Natural killer cell (primary cell): ENCODE measurements at regions of chr1 and their contacts with region 1.

Region 1: DNA sequence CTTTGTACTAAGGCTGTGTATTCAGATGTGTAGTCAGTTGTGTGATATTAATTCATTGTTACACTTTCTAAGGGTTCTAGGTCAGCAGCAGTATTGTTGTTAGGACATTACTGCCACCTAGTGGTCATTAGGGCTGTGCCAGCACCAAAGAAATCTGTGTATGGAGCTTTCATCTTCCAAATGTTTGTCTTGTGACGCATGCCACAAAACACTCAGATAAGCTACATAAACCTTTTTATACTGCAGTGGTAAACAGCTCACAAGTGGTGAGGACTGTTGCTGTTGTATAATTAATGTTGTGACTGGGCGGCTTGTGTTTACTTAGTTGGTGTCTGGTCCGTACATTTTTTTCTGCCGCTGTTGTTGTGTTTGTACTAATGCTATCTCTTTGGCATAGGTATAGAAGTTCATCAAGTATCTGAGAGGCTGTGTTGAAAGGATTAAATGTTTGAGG is 51.7 kb downstream of the S1PR1 start:
- DNase-seq: peak in 1 of 2 donors; percentile 91
- ATAC-seq: peak; percentile 37 to 69 (median 61)
- H3K4me3 ChIP-seq: no peak overlapping the region
- H3K4me3 Mint-ChIP-seq: no peak overlapping the region
- H3K27ac ChIP-seq: no peak overlapping the region
- H3K27ac Mint-ChIP-seq: peak overlapping the region; percentile 41 to 48
- H3K4me1 ChIP-seq: peaks cover 58% of the 10 kb centered on the region
- H3K4me1 Mint-ChIP-seq: peaks cover 68% of the 10 kb centered on the region in 2 donors
- H3K27me3 ChIP-seq: no peaks in the 10 kb centered on the region
- H3K27me3 Mint-ChIP-seq: no peaks in the 10 kb centered on the region
- CTCF ChIP-seq: peak; percentile 95

Region 2: GRCh38 chr1:100785470-100786052 is 503.0 kb before region 1 on chr1:
- intact Hi-C with region 1: no loop called
- DNase-seq: no peak
- ATAC-seq: peak in 2 of 3 donors; percentile 59 to 67
- H3K4me3 ChIP-seq: no peak overlapping the region
- H3K4me3 Mint-ChIP-seq: peak overlapping the region; percentile 35
- H3K27ac ChIP-seq: no peak overlapping the region
- H3K27ac Mint-ChIP-seq: no peak overlapping the region
- H3K4me1 ChIP-seq: no peaks in the 10 kb centered on the region
- H3K4me1 Mint-ChIP-seq: peaks cover 7 to 8% of the 10 kb centered on the region in 2 donors
- H3K27me3 ChIP-seq: no peaks in the 10 kb centered on the region
- H3K27me3 Mint-ChIP-seq: peaks cover 9 to 11% of the 10 kb centered on the region in 2 donors
- CTCF ChIP-seq: no peak

Region 3: DNA sequence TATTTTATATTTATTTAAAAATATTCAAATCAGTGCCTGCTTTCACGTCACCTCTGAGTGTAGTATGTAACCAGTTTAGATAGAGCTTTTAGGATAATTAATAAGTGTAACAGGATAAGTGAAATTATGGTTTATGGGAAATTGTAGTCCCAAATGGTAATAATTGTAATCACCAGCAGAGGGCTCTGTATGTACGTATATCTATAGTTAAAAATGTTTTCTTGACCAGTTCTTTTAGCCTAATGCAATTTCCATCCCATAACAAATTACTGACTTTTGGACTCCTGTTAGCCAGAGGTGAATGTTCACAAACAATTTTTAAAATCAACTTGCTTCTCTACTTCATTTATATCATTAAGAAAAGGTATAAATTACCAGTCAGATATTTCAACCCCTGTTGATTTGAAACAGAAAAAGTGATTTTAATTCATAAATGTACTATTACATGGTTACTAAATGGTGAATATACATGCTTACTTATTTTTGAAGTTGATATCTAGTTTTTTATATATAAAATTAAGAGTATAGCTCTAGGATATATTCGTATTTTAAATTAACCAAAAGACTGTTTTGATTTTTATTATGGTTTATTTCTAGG is 367.3 kb before region 1 on chr1:
- intact Hi-C with region 1: loop called (anchors 1 kb)
- DNase-seq: peak in 1 of 2 donors; percentile 81
- ATAC-seq: peak; percentile 66 to 76 (median 67)
- H3K4me3 ChIP-seq: no peak overlapping the region
- H3K4me3 Mint-ChIP-seq: no peak overlapping the region
- H3K27ac ChIP-seq: no peak overlapping the region
- H3K27ac Mint-ChIP-seq: no peak overlapping the region
- H3K4me1 ChIP-seq: peaks cover 2% of the 10 kb centered on the region
- H3K4me1 Mint-ChIP-seq: peaks cover 16 to 17% of the 10 kb centered on the region in 2 donors
- H3K27me3 ChIP-seq: no peaks in the 10 kb centered on the region
- H3K27me3 Mint-ChIP-seq: no peaks in the 10 kb centered on the region
- CTCF ChIP-seq: peak; percentile 96

Region 4: GRCh38 chr1:101025657-101026504 is 262.6 kb before region 1 on chr1 and contains the start of gene DPH5:
- intact Hi-C with region 1: loop called (anchors 5 kb)
- DNase-seq: peak; percentile 80 to 90
- ATAC-seq: peak; percentile 98 to 100 (median 99)
- H3K4me3 ChIP-seq: peak within 1 kb of the TSS; percentile 66
- H3K4me3 Mint-ChIP-seq: peak within 1 kb of the TSS; percentile 75
- H3K27ac ChIP-seq: peak within 1 kb of the TSS; percentile 61
- H3K27ac Mint-ChIP-seq: peak within 1 kb of the TSS; percentile 90 to 94
- H3K4me1 ChIP-seq: peaks cover 9% of the 10 kb centered on the region
- H3K4me1 Mint-ChIP-seq: peaks cover 32 to 42% of the 10 kb centered on the region in 2 donors
- H3K27me3 ChIP-seq: no peaks in the 10 kb centered on the region
- H3K27me3 Mint-ChIP-seq: no peaks in the 10 kb centered on the region
- CTCF ChIP-seq: no peak
- total RNA-seq, gene DPH5: 17.1 to 22.9 (median 19.9) TPM

Region 5: GRCh38 chr1:101043776-101044175 is 244.7 kb before region 1 on chr1:
- intact Hi-C with region 1: no loop called
- DNase-seq: peak in 1 of 2 donors; percentile 24
- ATAC-seq: no peak
- H3K4me3 ChIP-seq: no peak overlapping the region
- H3K4me3 Mint-ChIP-seq: no peak overlapping the region
- H3K27ac ChIP-seq: no peak overlapping the region
- H3K27ac Mint-ChIP-seq: no peak overlapping the region
- H3K4me1 ChIP-seq: no peaks in the 10 kb centered on the region
- H3K4me1 Mint-ChIP-seq: peaks cover 0 to 7% of the 10 kb centered on the region in 2 donors
- H3K27me3 ChIP-seq: no peaks in the 10 kb centered on the region
- H3K27me3 Mint-ChIP-seq: no peaks in the 10 kb centered on the region
- CTCF ChIP-seq: no peak

Region 6: DNA sequence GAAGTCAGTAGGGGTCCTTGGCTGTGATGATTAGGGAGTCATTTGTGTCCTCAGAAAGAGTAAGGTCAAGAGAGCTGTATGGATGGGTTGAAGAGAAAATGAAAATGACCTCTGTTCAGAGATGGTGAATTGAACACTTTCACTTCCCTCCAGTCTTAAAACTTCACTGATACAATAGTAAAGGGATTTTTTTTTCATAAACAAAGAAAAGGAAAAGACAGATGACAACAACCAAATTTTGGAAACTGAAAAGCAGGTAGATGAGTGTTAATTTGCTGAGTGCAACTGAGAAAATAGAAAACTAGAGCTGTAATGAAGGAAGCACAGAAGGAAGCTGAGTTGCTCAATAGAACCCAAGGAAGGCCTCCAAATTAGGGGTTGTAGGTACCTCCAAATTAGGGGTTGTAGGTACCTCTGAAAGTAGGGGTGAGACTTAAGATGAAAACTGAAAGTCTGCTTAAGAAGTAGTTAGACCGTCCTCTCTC is 66.5 kb before region 1 on chr1:
- intact Hi-C with region 1: no loop called
- DNase-seq: no peak
- ATAC-seq: no peak
- H3K4me3 ChIP-seq: no peak overlapping the region
- H3K4me3 Mint-ChIP-seq: no peak overlapping the region
- H3K27ac ChIP-seq: no peak overlapping the region
- H3K27ac Mint-ChIP-seq: no peak overlapping the region
- H3K4me1 ChIP-seq: no peaks in the 10 kb centered on the region
- H3K4me1 Mint-ChIP-seq: peaks cover 0 to 6% of the 10 kb centered on the region in 2 donors
- H3K27me3 ChIP-seq: no peaks in the 10 kb centered on the region
- H3K27me3 Mint-ChIP-seq: peaks cover 0 to 2% of the 10 kb centered on the region in 2 donors
- CTCF ChIP-seq: no peak

Region 7: GRCh38 chr1:101338714-101339430 is 50.4 kb after region 1 on chr1:
- intact Hi-C with region 1: loop called (anchors 10 kb)
- DNase-seq: peak; percentile 33 to 49
- ATAC-seq: peak; percentile 72 to 85 (median 84)
- H3K4me3 ChIP-seq: no peak overlapping the region
- H3K4me3 Mint-ChIP-seq: peak overlapping the region; percentile 78
- H3K27ac ChIP-seq: peak overlapping the region; percentile 47
- H3K27ac Mint-ChIP-seq: peak overlapping the region; percentile 91 to 92
- H3K4me1 ChIP-seq: peaks cover 20% of the 10 kb centered on the region
- H3K4me1 Mint-ChIP-seq: peaks cover 77 to 86% of the 10 kb centered on the region in 2 donors
- H3K27me3 ChIP-seq: no peaks in the 10 kb centered on the region
- H3K27me3 Mint-ChIP-seq: no peaks in the 10 kb centered on the region
- CTCF ChIP-seq: no peak

Region 8: DNA sequence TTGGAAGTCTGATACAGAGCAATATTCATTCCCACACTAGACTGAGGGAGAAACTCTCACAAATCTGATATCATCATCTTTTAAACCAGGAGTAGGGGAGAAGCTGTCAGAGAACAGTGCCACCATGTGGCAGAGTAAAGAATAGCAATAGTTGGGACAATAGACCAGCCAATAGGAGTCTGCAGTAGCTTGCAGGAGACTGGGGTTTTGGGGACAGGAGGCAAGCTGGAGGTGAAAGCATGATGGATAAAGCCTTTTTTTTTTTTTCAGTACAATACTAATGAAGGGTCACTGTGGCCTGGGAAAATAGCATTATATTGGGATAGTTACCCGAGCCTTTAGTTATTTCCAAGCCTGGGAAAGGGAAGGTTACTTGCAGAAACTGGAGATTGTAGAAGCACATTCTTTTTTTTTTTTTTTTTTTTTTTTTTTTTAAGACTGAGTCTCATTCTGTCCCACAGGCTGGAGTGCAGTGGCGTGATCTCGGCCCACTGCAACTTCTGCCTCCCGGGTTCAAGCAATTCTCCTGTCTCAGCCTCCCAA is 69.0 kb after region 1 on chr1:
- intact Hi-C with region 1: loop called (anchors 2 kb)
- DNase-seq: peak; percentile 54 to 94
- ATAC-seq: peak; percentile 96 to 100 (median 99)
- H3K4me3 ChIP-seq: no peak overlapping the region
- H3K4me3 Mint-ChIP-seq: peak overlapping the region; percentile 25
- H3K27ac ChIP-seq: no peak overlapping the region
- H3K27ac Mint-ChIP-seq: peak overlapping the region; percentile 83 to 86
- H3K4me1 ChIP-seq: no peaks in the 10 kb centered on the region
- H3K4me1 Mint-ChIP-seq: peaks cover 22 to 29% of the 10 kb centered on the region in 2 donors
- H3K27me3 ChIP-seq: no peaks in the 10 kb centered on the region
- H3K27me3 Mint-ChIP-seq: no peaks in the 10 kb centered on the region
- CTCF ChIP-seq: peak; percentile 82

Region 9: DNA sequence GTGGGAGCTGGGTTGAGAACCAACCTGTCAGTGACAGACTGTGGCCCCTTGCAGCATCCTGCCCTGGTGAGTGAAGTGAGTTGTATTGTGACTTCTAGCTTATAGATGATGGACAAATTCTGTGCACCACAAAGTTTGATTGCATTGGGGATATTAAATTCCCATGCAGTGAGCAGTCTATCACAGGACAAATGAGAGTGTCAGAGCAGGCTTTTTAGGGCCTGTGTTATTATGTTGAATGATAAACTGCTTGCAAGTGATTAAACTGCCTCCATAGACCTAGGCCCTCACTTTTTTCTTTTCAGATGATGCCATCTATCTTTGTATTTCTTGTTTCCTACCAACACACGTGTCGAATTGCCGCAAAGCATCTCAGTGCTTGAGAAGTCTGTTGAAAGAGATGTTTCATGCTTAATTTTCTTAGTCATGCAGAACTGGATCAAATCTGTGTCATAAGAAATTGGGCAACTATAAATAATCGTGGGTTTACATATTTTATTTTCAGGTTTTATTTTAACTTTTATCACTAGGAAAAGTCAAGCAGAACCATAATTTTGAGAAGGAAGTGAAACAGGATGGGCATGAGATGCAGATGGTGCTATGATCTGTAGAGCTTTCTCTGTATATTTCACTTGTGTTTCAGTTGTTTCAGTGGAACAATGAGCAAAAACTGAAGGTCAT is 147.5 kb after region 1 on chr1:
- intact Hi-C with region 1: no loop called
- DNase-seq: no peak
- ATAC-seq: no peak
- H3K4me3 ChIP-seq: no peak overlapping the region
- H3K4me3 Mint-ChIP-seq: no peak overlapping the region
- H3K27ac ChIP-seq: peak overlapping the region; percentile 56
- H3K27ac Mint-ChIP-seq: no peak overlapping the region
- H3K4me1 ChIP-seq: peaks cover 9% of the 10 kb centered on the region
- H3K4me1 Mint-ChIP-seq: no peaks in the 10 kb centered on the region
- H3K27me3 ChIP-seq: no peaks in the 10 kb centered on the region
- H3K27me3 Mint-ChIP-seq: peaks cover 0 to 3% of the 10 kb centered on the region in 2 donors
- CTCF ChIP-seq: no peak